H1 (cell line): ENCODE measurements at regions of chrX and their contacts with region 1.

Region 1: DNA sequence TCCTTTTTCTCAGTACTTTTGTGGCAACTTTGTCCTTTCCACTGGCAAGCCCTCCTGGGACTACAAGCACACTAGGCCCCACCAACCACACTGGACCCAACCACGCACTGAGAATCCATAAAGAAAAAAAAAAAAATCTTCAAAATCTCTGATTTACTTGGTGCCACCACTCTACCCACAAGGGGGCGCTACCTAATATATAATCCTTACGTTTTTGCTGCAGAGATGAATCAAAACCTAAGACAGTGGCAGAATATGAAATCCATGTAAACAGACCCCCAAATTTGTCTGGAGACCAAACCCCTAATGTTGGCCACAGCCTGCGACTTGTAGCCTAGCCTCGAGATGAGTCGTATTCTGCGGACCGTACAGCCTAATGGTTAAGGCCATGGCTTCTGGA is 63.5 kb upstream of the ARHGAP36 start:
- DNase-seq: peak in 1 of 2 experiments; percentile 47
- H3K4me3 ChIP-seq: no peak overlapping the region
- H3K27ac ChIP-seq: no peak overlapping the region
- H3K4me1 ChIP-seq: no peaks in the 10 kb centered on the region
- H3K27me3 ChIP-seq: no peaks in the 10 kb centered on the region
- CTCF ChIP-seq: peak in 2 of 3 experiments; percentile 37 to 45; a peak in 2 of 4 replicates
- EP300 ChIP-seq: no peak
- POLR2A ChIP-seq: no peak
- RAD21 ChIP-seq: peak; percentile 44 to 50

Region 2: DNA sequence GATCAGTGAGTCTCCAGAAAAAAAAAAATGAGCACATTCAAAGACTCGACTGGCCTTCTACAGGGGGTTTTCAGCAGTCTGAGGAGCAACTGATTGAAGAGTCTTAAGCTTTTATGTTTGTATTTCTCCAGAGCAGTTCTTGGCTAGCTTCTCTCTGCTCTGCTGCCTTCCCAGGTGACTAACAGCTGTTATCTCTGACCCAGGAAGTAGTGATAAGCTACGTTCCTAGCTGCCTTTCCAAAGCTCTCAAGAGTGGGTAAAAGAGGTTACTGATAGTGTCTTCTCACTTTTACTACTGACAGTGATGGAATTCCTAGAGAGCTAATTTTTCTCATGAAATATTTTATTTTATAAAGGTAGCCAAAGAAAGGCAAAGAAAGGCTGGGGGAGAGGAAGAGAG is 158.2 kb before region 1 on chrX:
- CTCF ChIA-PET with region 1: no interaction called
- POLR2A ChIA-PET with region 1: no interaction called
- DNase-seq: no peak
- H3K4me3 ChIP-seq: no peak overlapping the region
- H3K27ac ChIP-seq: no peak overlapping the region
- H3K4me1 ChIP-seq: 0 out of 7 replicates have a peak, but pooled peaks cover 0 to 4% (median 0%) of the 10 kb centered on the region in 4 experiments
- H3K27me3 ChIP-seq: no peaks in the 10 kb centered on the region
- CTCF ChIP-seq: no peak
- EP300 ChIP-seq: no peak
- POLR2A ChIP-seq: no peak
- RAD21 ChIP-seq: no peak

Region 3: DNA sequence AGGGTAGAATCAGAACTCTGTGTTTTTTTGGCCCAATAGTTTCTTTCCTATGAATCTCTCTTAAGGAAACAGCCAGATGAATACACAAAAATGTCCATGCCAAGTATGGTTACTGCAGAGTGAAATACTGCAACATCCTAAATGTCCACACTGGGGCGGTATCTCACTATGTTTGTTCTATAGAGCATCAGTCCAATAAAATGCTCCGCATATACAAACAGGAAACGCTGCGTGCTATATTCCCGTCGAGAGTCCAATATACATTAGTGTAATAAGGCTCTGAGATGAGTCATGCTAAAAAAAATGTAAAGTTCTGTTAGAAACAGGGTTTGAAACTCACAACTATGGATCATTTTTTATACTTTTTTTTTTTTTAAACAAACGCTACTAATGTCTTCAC is 18.7 kb before region 1 on chrX:
- CTCF ChIA-PET with region 1: interaction called, 18 read pairs
- POLR2A ChIA-PET with region 1: no interaction called
- DNase-seq: peak in 1 of 2 experiments; percentile 45
- H3K4me3 ChIP-seq: no peak overlapping the region
- H3K27ac ChIP-seq: no peak overlapping the region
- H3K4me1 ChIP-seq: no peaks in the 10 kb centered on the region
- H3K27me3 ChIP-seq: no peaks in the 10 kb centered on the region
- CTCF ChIP-seq: peak in 2 of 3 experiments; percentile 46 to 49; a peak in 3 of 4 replicates
- EP300 ChIP-seq: no peak
- POLR2A ChIP-seq: no peak
- RAD21 ChIP-seq: peak; percentile 74 to 80

Region 4: GRCh38 chrX:131359611-131360010 is 364.9 kb after region 1 on chrX:
- CTCF ChIA-PET with region 1: no interaction called
- POLR2A ChIA-PET with region 1: no interaction called
- DNase-seq: no peak
- H3K4me3 ChIP-seq: no peak overlapping the region
- H3K27ac ChIP-seq: no peak overlapping the region
- H3K4me1 ChIP-seq: peaks cover 0 to 2% (median 0%) of the 10 kb centered on the region in 4 experiments; a peak in 1 of 7 replicates
- H3K27me3 ChIP-seq: no peaks in the 10 kb centered on the region
- CTCF ChIP-seq: no peak
- EP300 ChIP-seq: no peak
- POLR2A ChIP-seq: no peak
- RAD21 ChIP-seq: no peak

Region 5: DNA sequence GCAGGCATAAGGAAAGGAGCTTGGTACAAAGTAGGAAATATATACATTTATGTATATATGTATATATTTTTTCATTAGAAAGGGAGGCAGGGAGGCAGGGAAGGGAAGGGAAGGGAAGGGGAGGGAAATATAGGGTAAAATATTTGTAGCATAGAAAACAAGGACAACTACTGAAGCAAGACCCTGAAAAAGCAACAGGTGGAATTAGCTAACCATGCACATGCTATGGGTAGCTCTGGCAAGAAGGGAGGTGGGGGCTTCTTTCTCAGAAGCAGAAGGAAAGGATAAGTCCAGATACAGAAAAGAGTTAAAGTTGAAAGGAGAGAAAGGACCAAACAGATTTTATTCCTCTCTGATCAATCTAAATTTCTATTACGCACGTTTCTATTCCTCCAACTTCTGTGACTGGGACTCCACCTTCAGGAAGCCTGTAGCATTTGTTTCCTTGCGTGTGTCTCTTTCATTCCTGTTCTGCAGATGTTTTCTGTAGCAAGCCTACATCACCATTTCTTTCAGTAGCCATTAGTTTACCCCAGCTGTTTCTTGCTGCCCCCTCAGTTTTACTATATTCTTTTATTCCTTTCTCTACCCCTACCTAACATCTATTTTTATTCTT is 632.1 kb after region 1 on chrX:
- CTCF ChIA-PET with region 1: interaction called, 10 read pairs
- POLR2A ChIA-PET with region 1: no interaction called
- DNase-seq: no peak
- H3K4me3 ChIP-seq: no peak overlapping the region
- H3K27ac ChIP-seq: no peak overlapping the region
- H3K4me1 ChIP-seq: no peaks in the 10 kb centered on the region
- H3K27me3 ChIP-seq: no peaks in the 10 kb centered on the region
- CTCF ChIP-seq: peak in 2 of 3 experiments; percentile 43 to 46; a peak in 2 of 4 replicates
- EP300 ChIP-seq: no peak
- POLR2A ChIP-seq: no peak
- RAD21 ChIP-seq: peak; percentile 74 to 80